ENCODE measurements at regions of chr15 and their contacts with region 1.

Region 1: DNA sequence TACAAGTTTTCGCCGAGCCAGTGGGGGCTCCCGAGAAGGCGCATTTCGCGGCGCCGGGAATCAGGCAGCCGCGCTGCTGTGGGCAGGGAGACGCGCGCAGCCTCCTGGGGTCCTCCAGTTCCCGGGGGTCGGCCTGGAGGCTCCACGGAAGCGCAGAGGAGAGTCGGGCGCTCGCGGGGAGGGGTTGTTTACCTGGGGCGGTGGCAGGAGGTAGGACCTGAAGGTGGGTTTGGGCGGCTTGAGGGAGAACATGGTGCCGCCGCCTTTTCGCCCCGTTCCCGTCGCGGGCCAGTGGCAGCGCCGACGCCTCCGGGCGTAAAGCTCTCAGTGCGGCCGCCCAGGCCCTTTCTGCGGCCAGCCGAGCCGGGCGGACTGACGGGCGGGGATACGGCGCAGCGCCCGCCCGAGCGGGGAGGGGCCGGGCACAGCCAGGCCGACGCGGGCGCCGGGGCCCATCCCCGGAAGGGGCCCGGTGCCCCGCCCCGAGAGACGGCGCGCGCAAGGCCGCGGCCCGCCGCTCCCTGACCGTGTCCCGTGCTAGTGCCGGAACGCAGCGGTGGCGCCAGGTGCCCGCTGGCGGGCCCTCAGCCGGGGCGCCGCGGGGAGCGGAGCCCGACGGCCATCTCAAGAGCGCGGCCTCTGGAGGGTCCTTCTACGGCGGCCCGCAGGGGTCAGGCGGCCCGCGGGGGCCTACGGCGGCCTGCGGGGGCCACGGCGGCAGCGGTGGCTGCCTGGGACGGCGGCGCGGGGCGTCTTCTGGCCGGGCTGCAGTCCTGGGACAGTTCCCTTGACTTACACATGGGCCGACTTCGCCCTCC is at the start of gene MTMR10:
- DNase-seq: peak; percentile 38 to 86
- H3K4me3 ChIP-seq: peak within 1 kb of the TSS; percentile 73 to 91 (median 86)
- H3K27ac ChIP-seq: peak within 1 kb of the TSS; percentile 81
- H3K4me1 ChIP-seq: peaks cover 0 to 2% (median 0%) of the 10 kb centered on the region in 4 experiments; a peak in 1 of 7 replicates
- H3K27me3 ChIP-seq: no peaks in the 10 kb centered on the region
- CTCF ChIP-seq: no peak
- EP300 ChIP-seq: peak in 1 of 2 experiments; percentile 35; a peak in 2 of 3 replicates
- POLR2A ChIP-seq: peak in 1 of 2 experiments; percentile 82; a peak in 2 of 3 replicates
- RAD21 ChIP-seq: no peak
- total RNA-seq, gene MTMR10: 13.1 and 13.7 TPM in 2 replicates

Region 2: GRCh38 chr15:31001707-31002106 is 10.2 kb after region 1 on chr15:
- CTCF ChIA-PET with region 1: interaction called, 4 read pairs
- POLR2A ChIA-PET with region 1: interaction called, 13 read pairs
- DNase-seq: no peak
- H3K4me3 ChIP-seq: no peak overlapping the region
- H3K27ac ChIP-seq: no peak overlapping the region
- H3K4me1 ChIP-seq: peaks cover 0 to 6% (median 2%) of the 10 kb centered on the region in 4 experiments; a peak in 4 of 7 replicates
- H3K27me3 ChIP-seq: no peaks in the 10 kb centered on the region
- CTCF ChIP-seq: no peak
- EP300 ChIP-seq: no peak
- POLR2A ChIP-seq: no peak
- RAD21 ChIP-seq: no peak

Measured in H1 (cell line).